ENCODE measurements at regions of chr3 and their contacts with region 1.

Region 1: DNA sequence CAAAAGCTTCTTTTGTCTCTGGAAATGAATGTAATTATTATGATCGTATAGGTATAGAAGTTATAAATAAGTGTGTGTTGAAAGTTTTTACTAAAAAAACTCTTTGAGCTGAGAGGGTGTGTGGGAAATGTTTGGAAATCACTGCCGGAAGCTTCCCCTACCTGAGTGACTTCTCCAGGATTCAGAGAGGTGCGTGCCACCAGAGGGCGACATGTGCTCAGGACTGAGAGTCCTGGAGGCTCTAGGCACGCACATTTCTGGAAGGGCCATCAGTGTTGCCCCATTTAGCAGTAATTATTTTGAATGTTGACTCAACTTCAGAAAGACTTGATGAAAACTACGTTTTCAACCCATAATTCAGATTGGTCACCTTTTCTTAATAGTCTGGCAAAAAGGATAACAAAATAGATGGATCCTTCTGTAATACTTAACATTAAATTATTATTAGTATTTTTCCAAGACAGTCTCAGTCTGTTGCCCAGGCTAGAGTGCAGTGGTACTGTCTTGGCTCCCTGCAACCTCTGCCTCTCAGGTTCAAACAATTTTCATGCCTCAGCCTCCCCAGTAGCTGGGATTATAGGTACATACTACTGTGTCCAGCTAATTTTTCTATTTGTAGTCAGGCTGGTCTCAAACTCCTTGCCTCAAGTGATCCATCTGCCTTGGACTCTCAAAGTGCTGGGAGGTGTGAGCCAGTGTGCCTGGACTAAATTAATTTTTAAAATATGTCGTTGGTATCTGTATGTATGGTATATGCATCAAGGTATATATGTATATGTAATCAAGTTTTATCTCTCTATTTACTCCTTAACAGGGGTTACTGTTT is 34.5 kb downstream of the GPR171 start:
- DNase-seq: peak; percentile 59 to 64
- ATAC-seq: peak; percentile 96 to 99
- H3K4me3 ChIP-seq: no peak overlapping the region
- H3K27ac ChIP-seq: 0 out of 6 replicates have a peak overlapping the region, but pooled peaks of 1 of the 2 experiments have one; percentile 6
- H3K4me1 ChIP-seq: no peaks in the 10 kb centered on the region
- CTCF ChIP-seq: peak; percentile 90
- EP300 ChIP-seq: no peak
- POLR2A ChIP-seq: no peak
- RAD21 ChIP-seq: peak; percentile 91 to 92

Region 2: DNA sequence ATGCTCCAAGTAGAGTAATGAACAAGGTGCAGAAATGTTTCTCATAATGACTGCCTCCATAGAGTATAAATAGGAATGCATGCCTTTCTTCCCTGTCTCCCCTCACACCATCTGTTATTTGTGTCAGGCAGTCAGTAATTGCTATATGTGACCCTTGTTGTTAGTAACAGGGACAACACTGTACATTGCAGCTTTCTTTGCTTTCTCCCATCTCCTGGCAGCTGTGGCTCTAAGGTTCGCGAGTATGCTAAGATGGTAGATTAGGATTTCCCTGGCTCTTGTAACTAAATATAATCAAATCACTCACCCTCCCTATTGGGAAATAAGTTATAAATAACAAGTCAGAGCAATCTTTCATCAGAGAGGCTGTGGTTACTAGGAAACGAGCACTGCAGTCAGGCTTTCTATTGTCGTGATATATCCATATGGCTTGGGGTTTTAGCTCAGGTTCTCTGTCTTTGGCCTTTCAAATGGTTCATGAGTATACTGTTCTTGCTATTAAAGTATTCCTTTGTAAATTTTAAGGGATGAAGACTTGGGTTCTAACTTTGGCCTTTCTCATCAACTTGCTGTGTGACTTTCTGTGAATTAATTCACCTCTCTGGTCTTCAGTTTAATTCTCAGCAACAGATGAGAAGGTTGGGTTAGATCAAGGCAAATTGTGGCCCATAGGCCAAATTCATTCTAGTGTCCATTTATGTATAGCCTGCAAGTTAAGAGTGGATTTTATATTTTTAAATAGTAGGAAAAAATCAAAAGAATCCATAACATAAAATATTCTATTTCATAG is 255.2 kb before region 1 on chr3:
- CTCF ChIA-PET with region 1: no interaction called
- POLR2A ChIA-PET with region 1: no interaction called
- DNase-seq: no peak
- ATAC-seq: no peak
- H3K4me3 ChIP-seq: no peak overlapping the region
- H3K27ac ChIP-seq: no peak overlapping the region
- H3K4me1 ChIP-seq: no peaks in the 10 kb centered on the region
- CTCF ChIP-seq: no peak
- EP300 ChIP-seq: no peak
- POLR2A ChIP-seq: no peak
- RAD21 ChIP-seq: no peak

Region 3: DNA sequence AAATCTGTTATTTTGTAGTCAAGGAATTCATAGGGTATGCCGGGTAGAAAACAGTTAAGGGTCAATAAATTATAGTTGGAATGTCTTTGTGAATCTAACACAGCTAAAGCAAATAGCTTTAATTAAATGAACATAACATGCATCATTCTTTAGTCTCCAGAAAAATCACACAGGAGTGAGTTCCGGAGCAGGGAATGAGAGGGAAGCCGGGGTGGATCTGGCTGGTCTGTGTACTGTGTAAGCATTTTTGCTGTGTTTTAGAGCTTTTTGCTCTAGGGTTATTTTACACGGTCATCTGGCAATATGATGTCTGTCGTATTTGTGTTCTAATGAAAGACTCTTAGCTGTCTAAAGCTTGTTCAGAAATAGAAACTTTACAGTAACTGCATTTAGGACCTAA is 25.6 kb before region 1 on chr3:
- CTCF ChIA-PET with region 1: no interaction called
- POLR2A ChIA-PET with region 1: no interaction called
- DNase-seq: no peak
- ATAC-seq: no peak
- H3K4me3 ChIP-seq: no peak overlapping the region
- H3K27ac ChIP-seq: no peak overlapping the region
- H3K4me1 ChIP-seq: peaks cover 7% of the 10 kb centered on the region; the same call in 2 of the 3 replicates
- CTCF ChIP-seq: no peak
- EP300 ChIP-seq: no peak
- POLR2A ChIP-seq: no peak
- RAD21 ChIP-seq: no peak

Region 4: GRCh38 chr3:151183265-151183671 is 14.8 kb after region 1 on chr3:
- CTCF ChIA-PET with region 1: interaction called, 19 read pairs
- POLR2A ChIA-PET with region 1: no interaction called
- DNase-seq: no peak
- ATAC-seq: no peak
- H3K4me3 ChIP-seq: no peak overlapping the region
- H3K27ac ChIP-seq: no peak overlapping the region
- H3K4me1 ChIP-seq: no peaks in the 10 kb centered on the region
- CTCF ChIP-seq: no peak
- EP300 ChIP-seq: no peak
- POLR2A ChIP-seq: no peak
- RAD21 ChIP-seq: no peak

Region 5: DNA sequence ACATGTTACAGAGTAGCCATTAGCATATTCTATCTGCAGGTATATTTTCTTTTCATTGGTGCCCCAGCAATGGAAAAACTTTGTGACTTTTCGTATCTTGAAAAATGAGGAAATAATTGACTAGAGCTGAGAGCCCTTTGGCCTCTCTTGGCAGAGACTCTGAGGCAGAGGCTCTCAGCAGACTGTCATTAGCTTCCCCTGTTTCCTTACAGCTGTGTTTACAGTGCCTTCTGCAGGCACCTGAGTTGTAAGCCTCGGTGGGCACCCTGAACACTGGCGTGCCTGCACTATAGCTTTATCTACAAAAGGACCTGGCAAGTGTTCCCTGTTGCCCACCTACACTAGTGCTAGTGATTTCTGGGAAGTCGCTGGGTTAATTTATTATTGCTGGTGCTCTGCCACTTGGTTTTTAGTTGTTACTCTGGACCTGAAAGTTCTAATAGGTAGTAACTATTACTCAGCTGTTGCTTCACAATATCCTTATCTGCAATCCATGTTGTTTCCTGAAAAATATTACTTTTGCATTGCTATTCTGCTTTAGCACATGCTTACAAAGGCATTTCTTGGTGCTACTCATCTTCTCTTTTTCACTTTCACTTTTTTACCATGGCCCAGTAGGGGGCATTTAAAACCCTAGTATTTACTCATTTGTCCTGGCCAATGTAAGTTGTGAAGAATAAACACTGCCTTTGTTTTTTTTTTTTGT is 42.3 kb after region 1 on chr3:
- CTCF ChIA-PET with region 1: interaction called, 36 read pairs
- POLR2A ChIA-PET with region 1: no interaction called
- DNase-seq: no peak
- ATAC-seq: peak in 1 of 2 experiments; percentile 38; a peak in 2 of 6 replicates
- H3K4me3 ChIP-seq: no peak overlapping the region
- H3K27ac ChIP-seq: no peak overlapping the region
- H3K4me1 ChIP-seq: peaks cover 4% of the 10 kb centered on the region; the same call in 2 of the 3 replicates
- CTCF ChIP-seq: peak; percentile 8; the same call in 1 of the 3 replicates
- EP300 ChIP-seq: no peak
- POLR2A ChIP-seq: no peak
- RAD21 ChIP-seq: no peak

Region 6: DNA sequence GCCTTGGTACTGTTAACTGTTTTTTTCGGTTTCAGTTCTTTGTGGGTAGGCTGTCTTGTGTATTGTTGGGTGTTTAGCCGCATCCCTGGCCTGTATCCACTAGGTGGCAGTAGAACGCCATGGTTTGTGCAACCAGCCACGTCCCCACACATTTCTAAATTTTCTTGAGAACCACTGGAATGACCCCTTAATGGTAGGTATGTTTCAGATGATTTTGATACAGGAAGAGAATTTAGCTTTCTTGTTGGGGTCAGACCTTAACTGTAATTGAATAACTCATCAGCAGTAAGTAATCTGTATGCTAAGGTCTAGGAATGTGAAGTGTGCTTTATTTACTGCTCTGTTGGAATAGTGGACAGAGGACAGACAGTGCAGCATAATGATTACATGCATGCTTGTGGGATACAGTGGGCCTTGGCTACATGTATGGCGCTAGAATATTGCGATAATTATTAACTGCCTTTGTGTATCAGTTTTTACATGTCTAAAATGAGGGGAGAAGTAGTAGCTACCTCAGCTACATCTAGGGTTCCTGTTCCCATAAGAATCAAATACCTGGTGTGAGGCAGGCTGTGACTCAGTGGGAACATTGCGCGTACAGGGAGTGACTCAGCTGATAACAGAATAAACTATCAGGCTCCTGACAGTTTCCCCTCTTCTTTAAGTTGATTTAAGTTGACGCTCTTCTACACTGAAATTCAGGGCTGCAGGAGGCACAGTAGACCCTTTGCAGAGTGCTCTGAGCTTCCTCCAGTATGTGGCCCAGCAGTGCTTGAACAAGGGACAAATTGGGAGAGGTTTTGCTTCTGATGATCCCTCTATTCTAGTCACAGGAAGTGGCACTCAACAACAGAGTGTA is 59.6 kb after region 1 on chr3:
- CTCF ChIA-PET with region 1: interaction called, 61 read pairs
- POLR2A ChIA-PET with region 1: no interaction called
- DNase-seq: peak; percentile 71
- ATAC-seq: peak; percentile 88 to 92
- H3K4me3 ChIP-seq: no peak overlapping the region
- H3K27ac ChIP-seq: peak overlapping the region; percentile 52 to 66
- H3K4me1 ChIP-seq: peaks cover 37% of the 10 kb centered on the region
- CTCF ChIP-seq: peak; percentile 96
- EP300 ChIP-seq: no peak
- POLR2A ChIP-seq: no peak
- RAD21 ChIP-seq: peak; percentile 94 to 95

Region 7: DNA sequence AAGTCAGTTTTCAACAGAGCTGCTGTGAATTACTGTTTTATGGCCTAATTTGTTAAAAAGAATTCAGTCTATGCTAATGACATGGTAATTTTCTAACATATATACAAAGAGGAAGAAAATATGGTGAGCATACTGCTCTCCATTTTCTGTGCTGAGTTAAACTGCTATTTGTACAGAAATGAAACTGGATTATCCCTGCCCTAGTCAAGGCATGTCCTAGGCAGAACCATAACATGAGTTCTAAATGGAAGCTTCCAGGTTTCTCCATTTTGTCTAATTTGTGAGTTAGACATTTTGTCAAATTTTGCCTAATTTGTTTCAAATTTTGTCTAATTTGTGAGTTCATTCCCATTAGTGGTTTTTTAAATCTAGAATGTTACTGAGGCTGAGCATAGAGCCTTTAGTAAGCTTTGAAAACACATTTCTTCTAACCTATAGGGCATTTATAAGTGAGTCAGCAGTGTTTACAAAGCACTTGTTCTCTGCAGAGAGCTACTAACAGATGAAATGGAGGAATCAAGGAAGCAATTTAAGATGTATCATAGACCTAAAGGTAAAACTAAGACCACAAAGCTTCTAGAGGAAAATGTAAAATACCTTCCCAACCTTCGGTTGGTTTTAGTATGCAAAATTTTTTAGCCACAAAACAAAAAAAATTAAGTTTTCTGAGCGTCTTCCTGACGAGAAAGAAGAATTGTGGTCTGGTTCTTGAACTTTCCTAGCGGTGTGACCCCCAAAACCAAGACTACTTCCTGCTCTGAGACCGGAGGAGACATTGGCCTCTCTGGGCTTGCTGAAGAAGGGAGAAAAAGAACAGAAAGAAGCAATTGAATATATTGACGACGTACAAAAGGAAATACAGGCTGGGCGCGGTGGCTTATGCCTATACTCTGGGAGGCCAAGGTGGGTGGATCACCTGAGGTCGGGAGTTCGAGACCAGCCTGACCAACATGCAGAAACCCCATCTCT is 100.1 kb after region 1 on chr3:
- CTCF ChIA-PET with region 1: interaction called, 17 read pairs
- POLR2A ChIA-PET with region 1: no interaction called
- DNase-seq: no peak
- ATAC-seq: no peak
- H3K4me3 ChIP-seq: no peak overlapping the region
- H3K27ac ChIP-seq: no peak overlapping the region
- H3K4me1 ChIP-seq: no peaks in the 10 kb centered on the region
- CTCF ChIP-seq: no peak
- EP300 ChIP-seq: no peak
- POLR2A ChIP-seq: no peak
- RAD21 ChIP-seq: no peak

Region 8: DNA sequence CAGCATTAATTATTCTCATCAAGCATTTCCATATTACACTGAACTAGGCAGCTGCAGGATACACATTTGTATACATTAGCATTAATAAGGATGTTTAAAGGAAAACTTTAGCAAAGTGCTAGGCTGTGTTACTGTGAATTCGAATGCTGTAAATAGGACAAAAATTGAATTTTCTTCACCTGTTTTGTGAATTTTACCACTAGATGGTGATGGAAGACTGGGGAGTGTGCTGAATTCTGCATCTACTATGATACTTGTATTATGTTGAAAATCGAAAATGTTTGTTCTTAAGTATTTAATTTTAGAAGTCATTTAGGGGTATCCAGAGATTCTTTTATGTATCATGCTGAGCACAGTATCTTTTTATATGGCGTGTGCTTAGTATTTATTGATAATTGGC is 122.2 kb after region 1 on chr3:
- CTCF ChIA-PET with region 1: interaction called, 67 read pairs
- POLR2A ChIA-PET with region 1: no interaction called
- DNase-seq: peak in 1 of 2 experiments; percentile 48
- ATAC-seq: peak; percentile 47 to 54; a peak in 1 of 6 replicates
- H3K4me3 ChIP-seq: no peak overlapping the region
- H3K27ac ChIP-seq: no peak overlapping the region
- H3K4me1 ChIP-seq: no peaks in the 10 kb centered on the region
- CTCF ChIP-seq: peak; percentile 89
- EP300 ChIP-seq: no peak
- POLR2A ChIP-seq: no peak
- RAD21 ChIP-seq: peak; percentile 92 to 94

Region 9: GRCh38 chr3:151526757-151527156 is 358.3 kb after region 1 on chr3:
- CTCF ChIA-PET with region 1: no interaction called
- POLR2A ChIA-PET with region 1: no interaction called
- DNase-seq: no peak
- ATAC-seq: no peak
- H3K4me3 ChIP-seq: no peak overlapping the region
- H3K27ac ChIP-seq: no peak overlapping the region
- H3K4me1 ChIP-seq: no peaks in the 10 kb centered on the region
- CTCF ChIP-seq: no peak
- EP300 ChIP-seq: no peak
- POLR2A ChIP-seq: no peak
- RAD21 ChIP-seq: no peak

Measured in A549 (cell line).